Tibial artery (tissue), 4 donors: ENCODE measurements at regions of chr7 and their contacts with region 1.

Region 1: GRCh38 chr7:91089382-91089963 is 174.8 kb upstream of the FZD1 start:
- DNase-seq: no peak
- H3K4me3 ChIP-seq: peak overlapping the region; percentile 31 to 36
- H3K27ac ChIP-seq: no peak overlapping the region
- H3K4me1 ChIP-seq: peaks cover 0 to 12% (median 6%) of the 10 kb centered on the region in 4 donors
- H3K27me3 ChIP-seq: no peaks in the 10 kb centered on the region
- CTCF ChIP-seq: peak; percentile 55 to 70

Region 2: DNA sequence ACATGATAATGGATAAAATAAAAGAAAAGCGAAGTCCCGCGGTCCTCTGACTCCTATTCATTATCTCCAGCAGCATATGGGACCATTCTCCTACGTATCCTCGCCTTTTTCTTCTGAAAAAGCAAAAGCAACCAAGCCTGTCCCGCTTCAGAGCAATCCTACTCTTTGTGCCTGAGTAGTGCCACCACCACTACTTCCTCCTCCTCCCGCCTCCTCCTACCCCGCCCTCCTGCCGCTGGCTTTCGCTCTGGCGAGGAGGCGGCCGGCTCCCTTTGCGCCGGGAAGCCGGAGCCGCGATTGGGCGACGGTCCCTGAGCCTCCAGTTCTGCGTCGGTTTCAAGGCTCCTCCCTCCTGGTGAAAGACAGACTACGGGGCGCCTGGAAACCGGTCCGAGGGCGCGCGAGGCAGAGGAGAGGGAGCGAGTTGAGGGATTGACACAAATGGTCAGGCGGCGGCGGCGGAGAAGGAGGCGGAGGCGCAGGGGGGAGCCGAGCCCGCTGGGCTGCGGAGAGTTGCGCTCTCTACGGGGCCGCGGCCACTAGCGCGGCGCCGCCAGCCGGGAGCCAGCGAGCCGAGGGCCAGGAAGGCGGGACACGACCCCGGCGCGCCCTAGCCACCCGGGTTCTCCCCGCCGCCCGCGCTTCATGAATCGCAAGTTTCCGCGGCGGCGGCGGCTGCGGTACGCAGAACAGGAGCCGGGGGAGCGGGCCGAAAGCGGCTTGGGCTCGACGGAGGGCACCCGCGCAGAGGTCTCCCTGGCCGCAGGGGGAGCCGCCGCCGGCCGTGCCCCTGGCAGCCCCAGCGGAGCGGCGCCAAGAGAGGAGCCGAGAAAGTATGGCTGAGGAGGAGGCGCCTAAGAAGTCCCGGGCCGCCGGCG is 174.8 kb after region 1 on chr7 and contains the start of gene FZD1:
- intact Hi-C with region 1: loop called (anchors 10 kb)
- DNase-seq: peak; percentile 97 to 99
- H3K4me3 ChIP-seq: peak within 1 kb of the TSS; percentile 76 to 95
- H3K27ac ChIP-seq: peak within 1 kb of the TSS; percentile 92 to 98
- H3K4me1 ChIP-seq: peaks cover 0 to 44% (median 11%) of the 10 kb centered on the region in 4 donors
- H3K27me3 ChIP-seq: no peaks in the 10 kb centered on the region
- CTCF ChIP-seq: peak in 1 of 2 experiments; percentile 18

Region 3: GRCh38 chr7:91636129-91636724 is 546.8 kb after region 1 on chr7:
- intact Hi-C with region 1: loop called (anchors 10 kb)
- DNase-seq: peak in 1 of 2 donors; percentile 21
- H3K4me3 ChIP-seq: no peak overlapping the region
- H3K27ac ChIP-seq: no peak overlapping the region
- H3K4me1 ChIP-seq: peaks cover 0 to 3% (median 0%) of the 10 kb centered on the region in 4 donors
- H3K27me3 ChIP-seq: no peaks in the 10 kb centered on the region
- CTCF ChIP-seq: peak; percentile 46 to 47

Region 4: GRCh38 chr7:91784463-91784862 is 695.0 kb after region 1 on chr7:
- intact Hi-C with region 1: loop called (anchors 10 kb)
- DNase-seq: no peak
- H3K4me3 ChIP-seq: no peak overlapping the region
- H3K27ac ChIP-seq: no peak overlapping the region
- H3K4me1 ChIP-seq: no peaks in the 10 kb centered on the region
- H3K27me3 ChIP-seq: no peaks in the 10 kb centered on the region
- CTCF ChIP-seq: peak; percentile 32 to 53

Region 5: GRCh38 chr7:91880413-91881241 is 791.2 kb after region 1 on chr7 and contains the start of gene MTERF1:
- intact Hi-C with region 1: no loop called
- DNase-seq: peak; percentile 89 to 93
- H3K4me3 ChIP-seq: peak within 1 kb of the TSS; percentile 59 to 82
- H3K27ac ChIP-seq: peak within 1 kb of the TSS; percentile 55 to 58
- H3K4me1 ChIP-seq: peaks cover 0 to 29% (median 8%) of the 10 kb centered on the region in 4 donors
- H3K27me3 ChIP-seq: no peaks in the 10 kb centered on the region
- CTCF ChIP-seq: peak; percentile 83 to 86